Posterior cingulate gyrus (tissue), 11 donors: ENCODE measurements at regions of chr6 and their contacts with region 1.

Region 1: GRCh38 chr6:163180874-163181541 is 233.5 kb upstream of the QKI start:
- DNase-seq: peak; percentile 77 to 98 (median 92)

Region 2: DNA sequence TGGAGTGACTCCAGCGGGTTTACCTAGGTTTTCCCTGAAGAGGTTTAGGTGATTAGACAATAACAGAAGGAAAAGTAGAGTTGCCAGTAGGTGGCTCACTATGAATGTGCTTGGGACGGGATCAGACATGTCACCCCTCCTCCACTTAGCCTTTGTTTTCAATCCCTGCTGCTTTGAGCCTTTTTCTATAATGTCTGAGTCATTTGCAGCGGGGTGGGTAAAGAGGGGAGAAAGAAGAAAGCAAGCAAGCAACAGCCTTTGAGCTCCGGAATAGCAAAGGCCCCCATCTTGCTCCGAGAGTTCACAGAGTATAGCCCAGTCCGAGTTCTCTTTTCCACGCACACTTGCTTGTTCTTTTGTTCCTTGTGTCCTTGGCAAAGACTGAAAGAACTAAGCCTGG is 324.1 kb before region 1 on chr6:
- intact Hi-C with region 1: loop called (anchors 2 kb)
- DNase-seq: peak in 8 of 10 donors; percentile 17 to 89 (median 52)

Region 3: DNA sequence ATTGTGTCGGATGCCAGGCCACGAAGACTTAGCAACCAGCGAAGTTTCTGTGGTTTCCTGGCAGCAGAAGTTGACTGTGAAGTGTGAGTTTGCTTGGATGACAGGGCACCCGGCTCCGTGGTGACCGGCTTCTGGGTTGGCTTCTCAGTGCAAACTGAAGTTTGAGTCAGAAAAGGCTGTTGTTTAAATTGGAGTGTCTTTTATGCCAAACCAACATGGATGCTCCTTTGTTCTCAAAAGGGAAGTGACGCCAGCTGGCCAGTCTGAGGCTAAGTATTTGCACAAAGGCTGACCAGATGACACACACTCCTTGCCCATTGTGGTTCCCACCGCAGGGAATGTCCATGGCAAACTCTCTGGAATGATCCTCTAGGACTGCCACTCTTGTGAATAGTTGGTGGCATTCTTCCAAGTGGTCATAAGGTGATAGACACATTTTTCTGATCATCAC is 68.7 kb after region 1 on chr6:
- intact Hi-C with region 1: loop called (anchors 5 kb)
- DNase-seq: peak in 6 of 10 donors; percentile 24 to 86 (median 46)

Region 4: GRCh38 chr6:163281656-163282055 is 100.6 kb after region 1 on chr6:
- intact Hi-C with region 1: no loop called
- DNase-seq: no peak

Region 5: GRCh38 chr6:163309491-163310026 is 128.6 kb after region 1 on chr6:
- intact Hi-C with region 1: loop called (anchors 10 kb)
- DNase-seq: peak in 1 of 10 donors; percentile 9

Region 6: GRCh38 chr6:163956571-163957407 is 775.8 kb after region 1 on chr6:
- intact Hi-C with region 1: loop called (anchors 2 kb)
- DNase-seq: peak in 9 of 10 donors; percentile 45 to 95 (median 76)